B cell (primary cell): ENCODE measurements at regions of chr19 and their contacts with region 1.

Region 1: DNA sequence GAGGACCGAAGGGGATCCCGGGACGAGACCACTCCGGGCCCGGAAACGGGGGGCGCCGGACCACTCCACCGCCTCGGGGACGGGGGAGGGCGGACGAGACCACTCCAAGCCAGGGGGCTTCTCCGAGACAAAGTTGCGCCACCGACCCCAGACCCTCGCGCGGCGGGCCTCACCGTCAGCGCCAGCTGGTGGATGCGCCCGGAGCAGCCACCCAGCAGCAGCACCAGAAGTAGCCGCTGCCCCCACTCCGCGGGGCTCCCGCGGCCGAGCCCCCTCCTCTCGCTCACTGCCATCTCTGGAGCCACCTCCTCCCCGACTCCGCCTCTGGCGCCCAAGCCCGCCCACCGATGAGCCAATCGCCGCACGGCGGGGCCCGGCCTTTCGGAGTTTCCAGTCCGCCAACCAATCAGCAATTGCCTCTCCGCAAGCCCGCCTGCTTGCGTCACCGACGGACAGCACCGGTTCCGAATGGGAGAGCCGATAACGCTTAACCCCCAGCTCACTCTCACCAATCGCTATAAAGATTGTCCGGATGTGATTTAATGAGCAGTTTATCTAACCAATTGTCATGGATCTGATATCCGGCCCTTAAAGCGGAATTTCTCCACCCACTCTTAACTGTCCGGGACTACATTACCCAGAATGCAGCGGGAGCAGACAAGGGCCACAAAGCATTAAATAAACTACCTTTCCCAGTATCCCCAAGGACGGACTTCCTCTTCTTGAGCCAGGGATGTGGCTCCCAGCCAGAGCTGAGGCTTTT is at the start of gene GPR108:
- DNase-seq: peak; percentile 99
- ATAC-seq: peak; percentile 73
- H3K4me3 ChIP-seq: peak within 1 kb of the TSS; percentile 69 to 89 (median 88)
- H3K4me3 Mint-ChIP-seq: peak within 1 kb of the TSS; percentile 94
- H3K27ac ChIP-seq: peak within 1 kb of the TSS; percentile 90 to 98
- H3K27ac Mint-ChIP-seq: peak within 1 kb of the TSS; percentile 99
- H3K4me1 ChIP-seq: peaks cover 39 to 51% of the 10 kb centered on the region in 2 donors
- H3K4me1 Mint-ChIP-seq: peaks cover 39% of the 10 kb centered on the region
- H3K27me3 ChIP-seq: no peaks in the 10 kb centered on the region
- H3K27me3 Mint-ChIP-seq: no peaks in the 10 kb centered on the region
- CTCF ChIP-seq: no peak
- total RNA-seq, gene GPR108: 78.8 and 79.0 TPM in 2 replicates

Region 2: GRCh38 chr19:6199240-6199983 is 538.1 kb before region 1 on chr19:
- CTCF ChIA-PET with region 1: no interaction called
- POLR2A ChIA-PET with region 1: no interaction called
- intact Hi-C with region 1: loop called (anchors 2 kb)
- DNase-seq: peak; percentile 100
- ATAC-seq: peak; percentile 88
- H3K4me3 ChIP-seq: peak overlapping the region; percentile 32 to 88 (median 72)
- H3K4me3 Mint-ChIP-seq: peak overlapping the region; percentile 99
- H3K27ac ChIP-seq: peak overlapping the region; percentile 56 to 60
- H3K27ac Mint-ChIP-seq: peak overlapping the region; percentile 89
- H3K4me1 ChIP-seq: peaks cover 17 to 34% of the 10 kb centered on the region in 2 donors
- H3K4me1 Mint-ChIP-seq: peaks cover 32% of the 10 kb centered on the region
- H3K27me3 ChIP-seq: no peaks in the 10 kb centered on the region
- H3K27me3 Mint-ChIP-seq: no peaks in the 10 kb centered on the region
- CTCF ChIP-seq: peak; percentile 57

Region 3: DNA sequence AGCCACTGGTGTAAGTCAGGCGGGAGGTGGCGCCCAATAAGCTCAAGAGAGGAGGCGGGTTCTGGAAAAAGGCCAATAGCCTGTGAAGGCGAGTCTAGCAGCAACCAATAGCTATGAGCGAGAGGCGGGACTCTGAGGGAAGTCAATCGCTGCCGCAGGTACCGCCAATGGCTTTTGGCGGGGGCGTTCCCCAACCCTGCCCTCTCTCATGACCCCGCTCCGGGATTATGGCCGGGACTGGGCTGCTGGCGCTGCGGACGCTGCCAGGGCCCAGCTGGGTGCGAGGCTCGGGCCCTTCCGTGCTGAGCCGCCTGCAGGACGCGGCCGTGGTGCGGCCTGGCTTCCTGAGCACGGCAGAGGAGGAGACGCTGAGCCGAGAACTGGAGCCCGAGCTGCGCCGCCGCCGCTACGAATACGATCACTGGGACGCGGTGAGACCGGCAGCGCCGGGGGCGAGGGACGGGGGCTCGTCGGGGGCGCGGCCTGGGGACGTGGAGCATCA is 364.8 kb before region 1 on chr19 and contains the start of gene ALKBH7:
- CTCF ChIA-PET with region 1: no interaction called
- POLR2A ChIA-PET with region 1: no interaction called
- intact Hi-C with region 1: loop called (anchors 2 kb)
- DNase-seq: peak; percentile 99
- ATAC-seq: peak; percentile 73
- H3K4me3 ChIP-seq: peak within 1 kb of the TSS; percentile 45 to 96 (median 93)
- H3K4me3 Mint-ChIP-seq: peak within 1 kb of the TSS; percentile 91
- H3K27ac ChIP-seq: peak within 1 kb of the TSS; percentile 88 to 98
- H3K27ac Mint-ChIP-seq: peak within 1 kb of the TSS; percentile 91
- H3K4me1 ChIP-seq: peaks cover 9 to 12% of the 10 kb centered on the region in 2 donors
- H3K4me1 Mint-ChIP-seq: peaks cover 11% of the 10 kb centered on the region
- H3K27me3 ChIP-seq: no peaks in the 10 kb centered on the region
- H3K27me3 Mint-ChIP-seq: no peaks in the 10 kb centered on the region
- CTCF ChIP-seq: no peak
- total RNA-seq, gene ALKBH7: 62.7 and 67.0 TPM in 2 replicates

Region 4: GRCh38 chr19:6530386-6531161 is 206.9 kb before region 1 on chr19 and contains the start of gene TNFSF9:
- CTCF ChIA-PET with region 1: no interaction called
- POLR2A ChIA-PET with region 1: interaction called, 4 read pairs
- intact Hi-C with region 1: loop called (anchors 5 kb)
- DNase-seq: peak; percentile 88
- ATAC-seq: peak; percentile 34
- H3K4me3 ChIP-seq: peak within 1 kb of the TSS in 4 of 5 experiments; percentile 50 to 66 (median 60)
- H3K4me3 Mint-ChIP-seq: peak within 1 kb of the TSS; percentile 87
- H3K27ac ChIP-seq: peak within 1 kb of the TSS in 1 of 2 donors; percentile 54
- H3K27ac Mint-ChIP-seq: peak within 1 kb of the TSS; percentile 82
- H3K4me1 ChIP-seq: peaks cover 42 to 64% of the 10 kb centered on the region in 2 donors
- H3K4me1 Mint-ChIP-seq: peaks cover 57% of the 10 kb centered on the region
- H3K27me3 ChIP-seq: peaks cover 0 to 17% (median 7%) of the 10 kb centered on the region in 4 experiments
- H3K27me3 Mint-ChIP-seq: peaks cover 11% of the 10 kb centered on the region
- CTCF ChIP-seq: no peak
- total RNA-seq, gene TNFSF9: 11.7 TPM in 2 replicates

Region 5: DNA sequence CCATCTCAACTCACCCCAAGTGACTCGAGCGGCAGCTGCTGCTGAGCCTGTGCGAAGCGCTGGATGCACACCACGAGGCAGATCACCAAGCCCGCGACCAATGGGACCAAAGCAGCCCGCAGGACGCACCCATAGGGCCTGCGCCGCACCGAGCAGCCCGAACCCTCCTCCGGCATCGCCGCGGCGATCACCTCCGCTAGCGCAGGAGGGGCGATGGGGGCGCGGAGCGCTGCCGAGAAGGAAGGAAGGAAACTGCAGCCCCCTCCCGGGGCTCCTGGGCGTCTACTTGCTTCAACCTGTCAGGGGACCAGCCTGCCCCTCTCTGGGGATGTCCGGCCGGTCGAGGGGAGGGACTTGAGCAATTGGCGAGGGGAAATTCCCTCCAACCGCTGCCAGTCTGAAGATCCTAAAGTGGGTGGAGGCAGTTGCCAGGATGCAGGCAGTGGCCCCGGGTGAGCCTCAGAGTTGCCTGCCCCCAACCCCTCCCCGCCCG is 146.6 kb before region 1 on chr19 and contains the start of gene CD70:
- CTCF ChIA-PET with region 1: no interaction called
- POLR2A ChIA-PET with region 1: interaction called, 4 read pairs
- intact Hi-C with region 1: loop called (anchors 5 kb)
- DNase-seq: peak; percentile 76
- ATAC-seq: peak; percentile 52
- H3K4me3 ChIP-seq: peak within 1 kb of the TSS in 4 of 5 experiments; percentile 16 to 60 (median 52)
- H3K4me3 Mint-ChIP-seq: peak within 1 kb of the TSS; percentile 99
- H3K27ac ChIP-seq: peak within 1 kb of the TSS in 1 of 2 donors; percentile 53
- H3K27ac Mint-ChIP-seq: peak within 1 kb of the TSS; percentile 93
- H3K4me1 ChIP-seq: peaks cover 55 to 56% of the 10 kb centered on the region in 2 donors
- H3K4me1 Mint-ChIP-seq: peaks cover 59% of the 10 kb centered on the region
- H3K27me3 ChIP-seq: peaks cover 0 to 45% (median 9%) of the 10 kb centered on the region in 4 experiments
- H3K27me3 Mint-ChIP-seq: peaks cover 32% of the 10 kb centered on the region
- CTCF ChIP-seq: no peak
- total RNA-seq, gene CD70: 48.5 and 49.1 TPM in 2 replicates

Region 6: GRCh38 chr19:6718741-6719539 is 18.5 kb before region 1 on chr19:
- CTCF ChIA-PET with region 1: interaction called, 7 read pairs
- POLR2A ChIA-PET with region 1: interaction called, 4 read pairs
- intact Hi-C with region 1: loop called (anchors 1 kb)
- DNase-seq: peak; percentile 44
- ATAC-seq: peak; percentile 19
- H3K4me3 ChIP-seq: no peak overlapping the region
- H3K4me3 Mint-ChIP-seq: no peak overlapping the region
- H3K27ac ChIP-seq: no peak overlapping the region
- H3K27ac Mint-ChIP-seq: no peak overlapping the region
- H3K4me1 ChIP-seq: peaks cover 32 to 35% of the 10 kb centered on the region in 2 donors
- H3K4me1 Mint-ChIP-seq: peaks cover 36% of the 10 kb centered on the region
- H3K27me3 ChIP-seq: no peaks in the 10 kb centered on the region
- H3K27me3 Mint-ChIP-seq: no peaks in the 10 kb centered on the region
- CTCF ChIP-seq: no peak

Region 7: GRCh38 chr19:6767357-6768235 is 30.1 kb after region 1 on chr19 and contains the start of gene SH2D3A:
- CTCF ChIA-PET with region 1: interaction called, 41 read pairs
- POLR2A ChIA-PET with region 1: interaction called, 17 read pairs
- intact Hi-C with region 1: loop called (anchors 1 kb)
- DNase-seq: peak; percentile 98
- ATAC-seq: peak; percentile 69
- H3K4me3 ChIP-seq: peak within 1 kb of the TSS; percentile 36 to 81 (median 68)
- H3K4me3 Mint-ChIP-seq: peak within 1 kb of the TSS; percentile 93
- H3K27ac ChIP-seq: peak within 1 kb of the TSS; percentile 89 to 96
- H3K27ac Mint-ChIP-seq: peak within 1 kb of the TSS; percentile 95
- H3K4me1 ChIP-seq: peaks cover 28 to 46% of the 10 kb centered on the region in 2 donors
- H3K4me1 Mint-ChIP-seq: peaks cover 47% of the 10 kb centered on the region
- H3K27me3 ChIP-seq: no peaks in the 10 kb centered on the region
- H3K27me3 Mint-ChIP-seq: no peaks in the 10 kb centered on the region
- CTCF ChIP-seq: no peak
- total RNA-seq, gene SH2D3A: 33.5 and 36.1 TPM in 2 replicates

Region 8: GRCh38 chr19:7482584-7483439 is 745.3 kb after region 1 on chr19:
- CTCF ChIA-PET with region 1: no interaction called
- POLR2A ChIA-PET with region 1: no interaction called
- intact Hi-C with region 1: no loop called
- DNase-seq: no peak
- ATAC-seq: no peak
- H3K4me3 ChIP-seq: no peak overlapping the region
- H3K4me3 Mint-ChIP-seq: no peak overlapping the region
- H3K27ac ChIP-seq: no peak overlapping the region
- H3K27ac Mint-ChIP-seq: no peak overlapping the region
- H3K4me1 ChIP-seq: peaks cover 6 to 8% of the 10 kb centered on the region in 2 donors
- H3K4me1 Mint-ChIP-seq: peaks cover 6% of the 10 kb centered on the region
- H3K27me3 ChIP-seq: no peaks in the 10 kb centered on the region
- H3K27me3 Mint-ChIP-seq: no peaks in the 10 kb centered on the region
- CTCF ChIP-seq: no peak